ENCODE measurements at regions of chr11 and their contacts with region 1.

Region 1: GRCh38 chr11:67239783-67240575 is 26.3 kb upstream of the GRK2 start:
- DNase-seq: peak; percentile 93 to 98 (median 95)
- ATAC-seq: peak; percentile 97
- H3K4me3 ChIP-seq: peak overlapping the region; percentile 85
- H3K27ac ChIP-seq: peak overlapping the region; percentile 94
- H3K4me1 ChIP-seq: peaks cover 8 to 22% of the 10 kb centered on the region in 2 experiments
- H3K27me3 ChIP-seq: no peaks in the 10 kb centered on the region
- CTCF ChIP-seq: peak in 1 of 3 experiments; percentile 9; a peak in 1 of 6 replicates
- EP300 ChIP-seq: peak; percentile 58
- POLR2A ChIP-seq: peak; percentile 95
- RAD21 ChIP-seq: no peak

Region 2: GRCh38 chr11:67119585-67120391 is 120.2 kb before region 1 on chr11:
- CTCF ChIA-PET with region 1: no interaction called
- POLR2A ChIA-PET with region 1: interaction called, 3 read pairs
- in situ Hi-C with region 1: no loop called
- intact Hi-C with region 1: loop called (anchors 2 kb)
- DNase-seq: peak in 3 of 4 experiments; percentile 41 to 73 (median 63)
- ATAC-seq: peak; percentile 72
- H3K4me3 ChIP-seq: peak overlapping the region; percentile 55
- H3K27ac ChIP-seq: peak overlapping the region; percentile 91
- H3K4me1 ChIP-seq: peaks cover 0 to 29% of the 10 kb centered on the region in 2 experiments; a peak in 4 of 5 replicates
- H3K27me3 ChIP-seq: no peaks in the 10 kb centered on the region
- CTCF ChIP-seq: peak in 2 of 3 experiments; percentile 22 to 75; a peak in 3 of 6 replicates
- EP300 ChIP-seq: no peak
- POLR2A ChIP-seq: no peak
- RAD21 ChIP-seq: no peak

Region 3: DNA sequence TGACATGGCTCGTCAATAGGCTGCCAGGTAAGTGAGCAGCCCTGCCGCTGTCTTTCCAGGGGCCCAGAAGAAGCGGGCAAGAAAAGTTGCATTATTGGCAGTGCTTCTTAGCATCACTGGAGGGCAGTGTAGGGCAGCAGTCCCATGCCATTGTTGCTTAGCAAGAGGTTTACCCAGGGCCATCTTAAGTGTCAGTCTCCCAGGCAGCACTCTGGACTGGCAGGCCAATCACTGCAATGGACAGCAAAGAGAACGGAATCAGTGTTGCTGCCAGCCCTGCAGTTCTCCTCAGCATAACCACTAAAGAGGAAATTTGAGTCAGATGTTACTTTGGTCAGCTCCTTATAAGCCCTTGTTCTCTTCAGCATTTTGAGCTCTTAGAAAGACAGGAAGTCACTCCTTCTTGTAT is 12.9 kb after region 1 on chr11:
- CTCF ChIA-PET with region 1: no interaction called
- POLR2A ChIA-PET with region 1: interaction called, 58 read pairs
- in situ Hi-C with region 1: no loop called
- intact Hi-C with region 1: no loop called
- DNase-seq: no peak
- ATAC-seq: peak; percentile 32; the same call in 2 of the 3 replicates
- H3K4me3 ChIP-seq: no peak overlapping the region
- H3K27ac ChIP-seq: no peak overlapping the region
- H3K4me1 ChIP-seq: peaks cover 4 to 16% of the 10 kb centered on the region in 2 experiments; a peak in 2 of 5 replicates
- H3K27me3 ChIP-seq: no peaks in the 10 kb centered on the region
- CTCF ChIP-seq: peak; percentile 24 to 44 (median 40); a peak in 4 of 6 replicates
- EP300 ChIP-seq: no peak
- POLR2A ChIP-seq: no peak; the same call in 1 of the 2 replicates
- RAD21 ChIP-seq: peak in 1 of 2 experiments; percentile 36; a peak in 1 of 4 replicates

Region 4: GRCh38 chr11:67401495-67402191 is 161.7 kb after region 1 on chr11 and contains the start of gene PPP1CA:
- CTCF ChIA-PET with region 1: no interaction called
- POLR2A ChIA-PET with region 1: no interaction called
- in situ Hi-C with region 1: no loop called
- intact Hi-C with region 1: no loop called
- DNase-seq: peak; percentile 90 to 99 (median 98)
- ATAC-seq: peak; percentile 89
- H3K4me3 ChIP-seq: peak within 1 kb of the TSS; percentile 91
- H3K27ac ChIP-seq: peak within 1 kb of the TSS; percentile 97
- H3K4me1 ChIP-seq: peaks cover 26 to 88% of the 10 kb centered on the region in 2 experiments
- H3K27me3 ChIP-seq: no peaks in the 10 kb centered on the region
- CTCF ChIP-seq: peak; percentile 37 to 69 (median 52); a peak in 5 of 6 replicates
- EP300 ChIP-seq: no peak
- POLR2A ChIP-seq: peak; percentile 84; the same call in 1 of the 2 replicates
- RAD21 ChIP-seq: peak; percentile 66 to 78
- polyA plus RNA-seq, gene PPP1CA: 18.2 to 51.4 TPM